Naive thymus-derived CD4-positive, alpha-beta T cell (primary cell): ENCODE measurements at regions of chr19 and their contacts with region 1.

Region 1: DNA sequence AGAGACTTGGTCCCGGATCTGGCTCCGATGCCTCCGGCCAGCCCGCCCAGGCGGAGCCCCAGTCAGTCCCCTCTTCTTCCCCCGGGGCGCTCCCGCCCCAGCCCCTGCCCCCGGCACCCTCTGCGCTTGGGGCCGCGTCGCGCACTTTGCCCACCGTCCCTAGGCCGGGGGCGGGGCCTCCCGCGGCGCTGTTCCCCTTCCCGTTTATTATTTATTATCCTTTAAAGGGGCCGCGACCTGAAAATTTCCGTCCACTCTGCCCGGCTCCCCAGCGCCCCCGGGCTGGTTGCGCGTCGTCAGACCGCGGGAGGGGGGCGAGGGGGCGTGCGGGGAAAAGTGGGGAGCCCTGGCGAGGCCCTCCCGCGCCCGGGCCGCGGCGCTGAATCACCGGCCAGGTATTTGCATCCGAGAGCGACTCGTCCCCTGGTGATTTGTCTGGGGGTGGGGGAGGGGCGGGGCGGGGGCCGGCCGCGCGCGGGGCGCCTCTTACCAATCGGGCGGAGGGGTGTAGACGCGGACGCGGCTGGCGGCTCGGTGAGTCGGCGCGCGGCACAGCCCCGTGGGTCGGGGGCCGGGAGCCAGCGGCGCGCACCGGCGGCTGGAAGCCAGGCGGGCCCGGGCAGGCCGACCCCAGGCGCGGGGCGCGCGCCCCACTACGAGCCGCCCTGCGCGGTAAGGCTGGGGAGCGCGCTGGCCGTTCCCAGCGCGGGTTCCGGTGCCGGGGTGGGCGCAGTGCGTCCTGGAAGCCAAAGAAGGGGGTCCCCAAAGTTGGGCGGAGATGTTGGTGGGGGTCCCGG is at the start of gene ARID3A:
- DNase-seq: peak; percentile 59 to 83 (median 76)
- ATAC-seq: peak; percentile 83
- H3K4me3 ChIP-seq: peak within 1 kb of the TSS; percentile 79
- H3K4me3 Mint-ChIP-seq: peak within 1 kb of the TSS; percentile 63 to 88 (median 82)
- H3K27ac ChIP-seq: peak within 1 kb of the TSS; percentile 68
- H3K27ac Mint-ChIP-seq: peak within 1 kb of the TSS in 6 of 9 donors; percentile 14 to 80 (median 67)
- H3K4me1 ChIP-seq: peaks cover 0 to 4% of the 10 kb centered on the region in 2 donors
- H3K4me1 Mint-ChIP-seq: peaks cover 5 to 20% (median 13%) of the 10 kb centered on the region in 7 donors
- H3K27me3 ChIP-seq: no peaks in the 10 kb centered on the region
- H3K27me3 Mint-ChIP-seq: no peaks in the 10 kb centered on the region
- total RNA-seq, gene ARID3A: 7.1 to 33.1 (median 10.2) TPM

Region 2: DNA sequence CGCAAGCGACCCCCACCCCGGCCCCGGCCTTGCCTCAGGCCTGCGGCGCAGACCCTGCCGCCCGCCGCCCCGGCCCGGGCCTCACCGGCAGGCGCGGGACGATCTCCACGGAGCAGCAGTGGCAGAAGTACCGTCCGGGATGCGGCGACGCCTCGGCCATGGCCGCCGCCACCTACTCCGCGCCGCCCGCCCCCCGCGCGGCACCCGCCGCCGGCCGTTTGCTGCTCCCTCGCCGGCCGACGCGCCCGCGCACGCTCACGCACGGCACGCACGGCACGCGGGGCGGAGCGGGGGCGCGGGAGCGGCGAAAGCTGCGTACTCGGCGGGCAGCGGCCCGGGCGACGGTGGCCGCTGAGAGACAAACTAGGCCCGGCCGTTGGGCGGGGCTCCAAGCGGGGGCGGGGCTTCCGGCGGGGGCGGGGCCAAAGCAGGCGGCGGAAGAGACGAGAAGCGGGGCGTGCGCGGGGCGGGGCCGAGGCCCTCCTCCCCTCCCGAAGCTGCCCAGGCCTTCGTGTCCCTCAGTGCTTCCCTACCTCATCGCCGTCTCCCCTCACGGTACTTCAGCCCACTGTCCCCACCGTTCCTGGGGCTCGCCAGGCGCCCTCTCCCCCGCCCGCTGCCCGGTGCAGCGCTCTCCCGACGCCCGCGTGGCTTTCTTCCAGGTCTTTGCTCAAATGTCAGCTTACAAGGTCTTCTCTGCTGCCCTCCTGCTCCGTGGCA is 262.6 kb before region 1 on chr19 and contains the start of gene RNF126:
- CTCF ChIA-PET with region 1: no interaction called
- POLR2A ChIA-PET with region 1: no interaction called
- intact Hi-C with region 1: loop called in 1 of 2 experiments (anchors 5 kb)
- DNase-seq: peak; percentile 83 to 92 (median 88)
- ATAC-seq: peak; percentile 78
- H3K4me3 ChIP-seq: peak within 1 kb of the TSS; percentile 92
- H3K4me3 Mint-ChIP-seq: peak within 1 kb of the TSS; percentile 95 to 99 (median 98)
- H3K27ac ChIP-seq: peak within 1 kb of the TSS; percentile 96
- H3K27ac Mint-ChIP-seq: peak within 1 kb of the TSS; percentile 93 to 98 (median 97)
- H3K4me1 ChIP-seq: peaks cover 27 to 30% of the 10 kb centered on the region in 2 donors
- H3K4me1 Mint-ChIP-seq: peaks cover 20 to 40% (median 32%) of the 10 kb centered on the region in 7 donors
- H3K27me3 ChIP-seq: no peaks in the 10 kb centered on the region
- H3K27me3 Mint-ChIP-seq: peaks cover 0 to 2% (median 0%) of the 10 kb centered on the region in 5 donors
- total RNA-seq, gene RNF126: 75.1 to 110 (median 101) TPM

Region 3: DNA sequence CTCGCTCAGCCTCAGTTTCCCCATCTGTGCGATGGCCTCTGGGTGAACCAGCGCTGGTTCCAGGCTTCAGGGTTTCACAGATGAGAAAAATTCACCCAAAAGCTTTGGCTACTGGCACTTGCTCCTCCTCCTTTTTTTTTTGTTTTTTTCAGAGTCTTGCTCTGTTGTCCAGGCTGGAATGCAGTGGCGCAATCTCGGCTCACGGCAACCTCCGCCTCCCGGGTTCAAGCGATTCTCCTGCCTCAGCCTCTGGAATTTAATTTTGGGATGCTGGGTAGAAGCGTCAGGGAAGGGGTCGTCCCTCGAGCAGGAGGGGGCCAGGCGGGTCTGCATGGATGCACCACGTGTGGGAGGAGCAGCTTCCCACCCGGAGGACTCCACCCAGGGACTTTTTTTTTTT is 237.5 kb before region 1 on chr19:
- CTCF ChIA-PET with region 1: no interaction called
- POLR2A ChIA-PET with region 1: no interaction called
- intact Hi-C with region 1: no loop called
- DNase-seq: no peak
- ATAC-seq: no peak
- H3K4me3 ChIP-seq: no peak overlapping the region
- H3K4me3 Mint-ChIP-seq: no peak overlapping the region
- H3K27ac ChIP-seq: no peak overlapping the region
- H3K27ac Mint-ChIP-seq: peak overlapping the region in 1 of 9 donors; percentile 79
- H3K4me1 ChIP-seq: no peaks in the 10 kb centered on the region
- H3K4me1 Mint-ChIP-seq: peaks cover 0 to 1% (median 0%) of the 10 kb centered on the region in 7 donors
- H3K27me3 ChIP-seq: no peaks in the 10 kb centered on the region
- H3K27me3 Mint-ChIP-seq: no peaks in the 10 kb centered on the region

Region 4: DNA sequence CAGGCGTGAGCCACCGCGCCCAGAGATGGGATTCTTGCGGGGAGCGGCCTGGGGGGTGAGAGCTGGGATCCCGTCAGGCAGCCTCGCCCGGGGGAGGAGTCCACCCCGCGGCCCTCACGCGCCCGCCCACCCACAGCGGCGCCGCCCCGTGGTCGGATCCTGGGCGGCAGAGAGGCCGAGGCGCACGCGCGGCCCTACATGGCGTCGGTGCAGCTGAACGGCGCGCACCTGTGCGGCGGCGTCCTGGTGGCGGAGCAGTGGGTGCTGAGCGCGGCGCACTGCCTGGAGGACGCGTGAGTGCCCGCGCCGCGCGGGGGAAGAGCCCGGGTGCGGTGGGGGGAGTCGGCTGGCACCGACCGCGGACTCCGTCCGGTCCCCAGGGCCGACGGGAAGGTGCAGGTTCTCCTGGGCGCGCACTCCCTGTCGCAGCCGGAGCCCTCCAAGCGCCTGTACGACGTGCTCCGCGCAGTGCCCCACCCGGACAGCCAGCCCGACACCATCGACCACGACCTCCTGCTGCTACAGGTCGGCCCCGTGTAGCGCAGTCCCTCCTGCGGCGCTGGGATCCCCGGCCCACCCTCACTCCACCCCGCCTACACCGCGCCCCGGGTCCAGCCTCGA is 65.1 kb before region 1 on chr19:
- CTCF ChIA-PET with region 1: interaction called, 26 read pairs
- POLR2A ChIA-PET with region 1: interaction called, 82 read pairs
- intact Hi-C with region 1: loop called (anchors 1 kb)
- DNase-seq: peak in 8 of 9 donors; percentile 46 to 69 (median 58)
- ATAC-seq: peak; percentile 55
- H3K4me3 ChIP-seq: no peak overlapping the region
- H3K4me3 Mint-ChIP-seq: peak overlapping the region in 6 of 10 donors; percentile 17 to 64 (median 46)
- H3K27ac ChIP-seq: no peak overlapping the region
- H3K27ac Mint-ChIP-seq: no peak overlapping the region
- H3K4me1 ChIP-seq: peaks cover 14 to 23% of the 10 kb centered on the region in 2 donors
- H3K4me1 Mint-ChIP-seq: peaks cover 0 to 21% (median 16%) of the 10 kb centered on the region in 7 donors
- H3K27me3 ChIP-seq: no peaks in the 10 kb centered on the region
- H3K27me3 Mint-ChIP-seq: peaks cover 0 to 18% (median 0%) of the 10 kb centered on the region in 5 donors

Region 5: GRCh38 chr19:984165-984967 is 58.6 kb after region 1 on chr19 and contains the start of gene WDR18:
- CTCF ChIA-PET with region 1: interaction called, 106 read pairs
- POLR2A ChIA-PET with region 1: interaction called, 28 read pairs
- intact Hi-C with region 1: loop called (anchors 1 kb)
- DNase-seq: peak; percentile 62 to 93 (median 76)
- ATAC-seq: peak; percentile 93
- H3K4me3 ChIP-seq: peak within 1 kb of the TSS; percentile 56
- H3K4me3 Mint-ChIP-seq: peak within 1 kb of the TSS; percentile 78 to 98 (median 92)
- H3K27ac ChIP-seq: peak within 1 kb of the TSS; percentile 99
- H3K27ac Mint-ChIP-seq: peak within 1 kb of the TSS; percentile 80 to 94 (median 90)
- H3K4me1 ChIP-seq: peaks cover 4 to 17% of the 10 kb centered on the region in 2 donors
- H3K4me1 Mint-ChIP-seq: peaks cover 6 to 21% (median 17%) of the 10 kb centered on the region in 7 donors
- H3K27me3 ChIP-seq: no peaks in the 10 kb centered on the region
- H3K27me3 Mint-ChIP-seq: no peaks in the 10 kb centered on the region
- total RNA-seq, gene WDR18: 20.7 to 63.8 (median 48.5) TPM

Region 6: GRCh38 chr19:1001538-1002166 is 75.9 kb after region 1 on chr19:
- CTCF ChIA-PET with region 1: interaction called, 5 read pairs
- POLR2A ChIA-PET with region 1: interaction called, 4 read pairs
- intact Hi-C with region 1: loop called (anchors 1 kb)
- DNase-seq: peak; percentile 45 to 82 (median 70)
- ATAC-seq: peak; percentile 83
- H3K4me3 ChIP-seq: no peak overlapping the region
- H3K4me3 Mint-ChIP-seq: peak overlapping the region in 4 of 10 donors; percentile 21 to 75 (median 44)
- H3K27ac ChIP-seq: no peak overlapping the region
- H3K27ac Mint-ChIP-seq: peak overlapping the region in 1 of 9 donors; percentile 24
- H3K4me1 ChIP-seq: peaks cover 14 to 17% of the 10 kb centered on the region in 2 donors
- H3K4me1 Mint-ChIP-seq: peaks cover 1 to 13% (median 7%) of the 10 kb centered on the region in 7 donors
- H3K27me3 ChIP-seq: peaks cover 5 to 6% of the 10 kb centered on the region in 2 donors
- H3K27me3 Mint-ChIP-seq: peaks cover 7 to 39% (median 20%) of the 10 kb centered on the region in 5 donors

Region 7: DNA sequence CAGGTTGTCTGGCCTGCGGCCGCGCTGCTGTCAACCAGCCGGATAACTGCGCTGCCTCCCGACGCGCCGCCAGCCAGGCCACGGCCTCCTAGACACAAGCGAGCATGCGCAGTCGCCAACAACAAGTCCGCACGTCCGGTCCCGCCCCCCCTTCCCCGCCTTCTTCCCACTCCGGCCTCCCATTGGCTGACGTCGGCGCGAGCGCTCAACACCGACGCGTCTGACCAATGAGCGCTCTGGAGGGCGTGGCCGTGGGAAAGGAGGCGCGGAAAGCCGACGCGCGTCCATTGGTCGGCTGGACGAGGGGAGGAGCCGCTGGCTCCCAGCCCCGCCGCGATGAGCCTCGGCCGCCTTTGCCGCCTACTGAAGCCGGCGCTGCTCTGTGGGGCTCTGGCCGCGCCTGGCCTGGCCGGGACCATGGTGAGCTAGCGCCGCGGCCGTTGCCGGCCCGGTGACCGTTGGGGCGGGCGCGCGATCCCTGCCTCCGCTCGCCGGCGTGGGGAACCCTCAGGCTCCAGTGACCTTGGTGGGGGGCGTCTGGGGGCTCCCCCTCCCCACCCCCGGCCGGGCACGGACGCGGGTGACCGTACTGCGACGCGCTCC is 178.1 kb after region 1 on chr19 and contains the start of gene GPX4:
- CTCF ChIA-PET with region 1: interaction called, 4 read pairs
- POLR2A ChIA-PET with region 1: no interaction called
- intact Hi-C with region 1: loop called in 1 of 2 experiments (anchors 1 kb)
- DNase-seq: peak; percentile 90 to 98 (median 95)
- ATAC-seq: peak; percentile 91
- H3K4me3 ChIP-seq: peak within 1 kb of the TSS; percentile 79
- H3K4me3 Mint-ChIP-seq: peak within 1 kb of the TSS; percentile 66 to 82 (median 78)
- H3K27ac ChIP-seq: peak within 1 kb of the TSS; percentile 100
- H3K27ac Mint-ChIP-seq: peak within 1 kb of the TSS; percentile 79 to 96 (median 93)
- H3K4me1 ChIP-seq: peaks cover 13 to 18% of the 10 kb centered on the region in 2 donors
- H3K4me1 Mint-ChIP-seq: peaks cover 17 to 48% (median 36%) of the 10 kb centered on the region in 7 donors
- H3K27me3 ChIP-seq: no peaks in the 10 kb centered on the region
- H3K27me3 Mint-ChIP-seq: no peaks in the 10 kb centered on the region
- total RNA-seq, gene GPX4: 122 to 235 (median 194) TPM

Region 8: GRCh38 chr19:1230585-1231489 is 305.1 kb after region 1 on chr19:
- CTCF ChIA-PET with region 1: no interaction called
- POLR2A ChIA-PET with region 1: no interaction called
- intact Hi-C with region 1: no loop called
- DNase-seq: peak in 1 of 9 donors; percentile 8
- ATAC-seq: no peak
- H3K4me3 ChIP-seq: no peak overlapping the region
- H3K4me3 Mint-ChIP-seq: no peak overlapping the region
- H3K27ac ChIP-seq: no peak overlapping the region
- H3K27ac Mint-ChIP-seq: no peak overlapping the region
- H3K4me1 ChIP-seq: no peaks in the 10 kb centered on the region
- H3K4me1 Mint-ChIP-seq: no peaks in the 10 kb centered on the region
- H3K27me3 ChIP-seq: no peaks in the 10 kb centered on the region
- H3K27me3 Mint-ChIP-seq: no peaks in the 10 kb centered on the region

Region 9: DNA sequence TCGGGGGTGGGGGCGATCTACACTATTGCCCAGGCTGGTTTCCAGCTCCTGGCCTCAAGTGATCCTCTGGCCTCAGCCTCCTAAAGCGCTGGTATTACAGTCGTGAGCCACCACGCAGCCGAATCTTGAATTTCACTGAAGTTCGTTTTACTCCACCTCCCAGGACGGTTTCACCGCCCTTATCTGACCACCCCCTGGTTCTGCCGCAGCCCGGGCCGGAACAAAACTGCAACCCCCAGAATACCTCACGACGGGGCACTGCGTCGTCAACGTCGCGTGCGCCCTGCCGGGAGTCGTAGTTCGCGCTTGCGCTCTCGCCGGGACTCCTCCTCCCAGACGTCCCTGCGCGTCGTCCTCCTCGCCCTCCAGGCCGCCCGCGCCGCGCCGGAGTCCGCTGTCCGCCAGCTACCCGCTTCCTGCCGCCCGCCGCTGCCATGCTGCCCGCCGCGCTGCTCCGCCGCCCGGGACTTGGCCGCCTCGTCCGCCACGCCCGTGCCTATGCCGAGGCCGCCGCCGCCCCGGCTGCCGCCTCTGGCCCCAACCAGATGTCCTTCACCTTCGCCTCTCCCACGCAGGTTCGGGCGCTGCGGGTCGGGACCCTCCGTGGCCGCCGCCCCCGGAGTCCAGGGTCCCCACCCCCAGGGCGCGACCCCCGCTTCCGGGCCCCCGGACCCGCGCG is 315.8 kb after region 1 on chr19 and contains the start of gene ATP5F1D:
- CTCF ChIA-PET with region 1: no interaction called
- POLR2A ChIA-PET with region 1: no interaction called
- intact Hi-C with region 1: loop called (anchors 1 to 2 kb)
- DNase-seq: peak; percentile 76 to 91 (median 85)
- ATAC-seq: peak; percentile 74
- H3K4me3 ChIP-seq: peak within 1 kb of the TSS; percentile 57
- H3K4me3 Mint-ChIP-seq: peak within 1 kb of the TSS; percentile 86 to 96 (median 90)
- H3K27ac ChIP-seq: peak within 1 kb of the TSS; percentile 82
- H3K27ac Mint-ChIP-seq: peak within 1 kb of the TSS; percentile 81 to 96 (median 93)
- H3K4me1 ChIP-seq: peaks cover 29 to 33% of the 10 kb centered on the region in 2 donors
- H3K4me1 Mint-ChIP-seq: peaks cover 16 to 47% (median 25%) of the 10 kb centered on the region in 7 donors
- H3K27me3 ChIP-seq: no peaks in the 10 kb centered on the region
- H3K27me3 Mint-ChIP-seq: peaks cover 4 to 18% (median 9%) of the 10 kb centered on the region in 5 donors
- total RNA-seq, gene ATP5F1D: 90.6 to 178 (median 102) TPM